Calu3 (cell line): ENCODE measurements at regions of chr12 and their contacts with region 1.

Region 1: GRCh38 chr12:95117178-95117599 is 43.8 kb upstream of the NR2C1 start:
- DNase-seq: peak; percentile 78
- H3K4me3 Mint-ChIP-seq: peak overlapping the region; percentile 78
- H3K27ac Mint-ChIP-seq: peak overlapping the region; percentile 99
- H3K4me1 Mint-ChIP-seq: peaks cover 47% of the 10 kb centered on the region
- H3K27me3 Mint-ChIP-seq: no peaks in the 10 kb centered on the region
- CTCF ChIP-seq: peak; percentile 76

Region 2: DNA sequence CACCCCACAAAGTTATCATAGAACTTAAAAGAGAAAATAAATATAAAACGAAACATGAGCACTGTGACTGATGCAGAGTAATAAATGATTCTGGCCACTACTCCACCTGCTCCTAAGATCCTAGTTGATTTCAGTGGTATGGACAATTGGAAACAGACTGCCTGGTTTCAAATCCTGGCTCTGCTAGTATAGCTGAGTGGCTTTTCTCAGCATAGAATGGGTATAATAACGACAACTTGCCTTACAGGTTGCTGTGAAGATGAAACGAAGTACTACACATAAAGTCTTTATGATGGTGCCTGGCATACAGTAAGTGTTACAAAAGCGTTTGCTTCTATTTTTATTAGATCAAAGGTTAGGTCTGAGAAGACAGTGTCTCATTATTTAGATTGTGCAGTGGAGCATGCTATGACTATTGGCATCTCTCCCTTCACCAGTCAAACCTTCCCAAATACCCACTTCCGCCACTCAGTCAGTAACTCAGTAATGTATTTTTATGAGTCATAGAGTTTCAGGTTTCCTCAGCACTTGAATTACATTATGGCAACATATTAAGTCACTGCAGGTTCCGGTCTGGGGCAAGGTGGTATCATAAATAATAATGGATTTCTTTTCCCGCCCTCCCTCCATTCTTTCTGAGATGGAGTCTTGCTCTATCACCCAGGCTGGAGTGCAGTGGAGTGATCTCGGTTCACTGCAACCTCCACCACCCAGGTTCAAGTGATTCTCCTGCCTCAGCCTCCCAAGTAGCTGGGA is 14.1 kb before region 1 on chr12:
- CTCF ChIA-PET with region 1: interaction called, 6 read pairs
- intact Hi-C with region 1: loop called (anchors 1 kb)
- DNase-seq: peak; percentile 73
- H3K4me3 Mint-ChIP-seq: peak overlapping the region; percentile 13
- H3K27ac Mint-ChIP-seq: peak overlapping the region; percentile 84
- H3K4me1 Mint-ChIP-seq: peaks cover 64% of the 10 kb centered on the region
- H3K27me3 Mint-ChIP-seq: no peaks in the 10 kb centered on the region
- CTCF ChIP-seq: no peak

Region 3: DNA sequence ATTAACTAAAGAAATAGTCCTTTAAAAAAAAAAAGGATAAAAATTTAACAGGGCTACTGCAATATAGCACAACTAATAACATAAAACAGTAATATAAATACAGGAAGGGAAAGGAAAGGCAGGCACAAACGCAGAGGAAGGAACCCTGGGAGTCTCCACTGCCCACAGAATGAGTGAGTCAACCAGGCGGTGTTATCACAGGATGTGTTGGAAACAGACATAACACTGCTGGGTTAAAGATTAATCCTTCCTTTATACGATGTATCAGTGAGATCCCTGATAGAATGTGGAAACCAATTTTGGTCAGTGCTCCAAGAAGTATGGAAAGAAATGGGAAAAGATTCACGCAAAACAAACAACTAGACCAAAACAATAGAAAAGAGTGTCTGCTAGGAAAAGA is 52.2 kb after region 1 on chr12:
- CTCF ChIA-PET with region 1: interaction called, 6 read pairs
- intact Hi-C with region 1: loop called (anchors 2 kb)
- DNase-seq: peak; percentile 80
- H3K4me3 Mint-ChIP-seq: peak overlapping the region; percentile 39
- H3K27ac Mint-ChIP-seq: peak overlapping the region; percentile 90
- H3K4me1 Mint-ChIP-seq: peaks cover 38% of the 10 kb centered on the region
- H3K27me3 Mint-ChIP-seq: no peaks in the 10 kb centered on the region
- CTCF ChIP-seq: no peak

Region 4: DNA sequence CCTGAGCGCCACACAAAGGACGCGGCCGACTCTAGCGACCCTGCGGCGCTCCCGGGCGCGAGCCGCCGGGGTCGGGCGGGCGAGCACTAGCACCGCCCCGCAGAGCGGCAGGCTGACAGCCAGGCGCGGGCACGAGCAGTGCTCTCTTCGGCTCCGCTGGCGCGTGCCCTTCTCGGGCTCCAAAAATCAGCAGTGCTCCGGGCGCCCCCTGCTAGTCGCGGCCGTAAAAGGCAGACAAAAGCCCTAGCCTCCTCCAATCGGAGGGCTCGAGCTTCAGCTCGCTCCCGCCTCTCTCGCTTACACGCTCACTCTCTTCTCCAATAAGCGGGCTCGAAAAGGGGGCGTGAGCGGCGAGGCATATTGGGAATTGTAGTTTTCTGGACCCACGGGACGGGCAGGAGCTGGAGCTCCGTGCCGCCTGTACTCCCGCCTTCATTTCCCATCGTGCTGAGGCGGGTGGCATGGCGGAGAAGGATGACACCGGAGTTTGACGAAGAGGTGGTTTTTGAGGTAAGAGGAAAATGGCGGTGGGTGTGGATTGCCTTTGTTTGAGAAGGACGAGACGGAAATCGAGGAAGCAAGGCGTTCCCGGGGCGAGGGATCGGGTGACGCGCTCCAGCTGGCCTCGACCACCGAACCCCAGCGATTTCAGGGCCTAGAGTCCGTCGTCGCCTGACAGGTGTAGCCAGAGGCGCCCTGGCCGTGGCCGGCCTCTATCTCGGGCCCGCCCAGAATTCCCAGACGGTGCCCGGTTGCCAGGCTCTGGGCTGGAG is 100.4 kb after region 1 on chr12 and contains the starts of genes FGD6 and VEZT:
- CTCF ChIA-PET with region 1: interaction called, 44 read pairs
- intact Hi-C with region 1: loop called (anchors 1 kb)
- DNase-seq: peak; percentile 99
- H3K4me3 Mint-ChIP-seq: peak within 1 kb of the TSS; percentile 77
- H3K27ac Mint-ChIP-seq: peak within 1 kb of the TSS; percentile 88
- H3K4me1 Mint-ChIP-seq: peaks cover 8% of the 10 kb centered on the region
- H3K27me3 Mint-ChIP-seq: no peaks in the 10 kb centered on the region
- CTCF ChIP-seq: peak; percentile 63
- total RNA-seq, gene FGD6: 64.5 and 66.6 TPM in 2 replicates
- total RNA-seq, gene VEZT: 149 and 160 TPM in 2 replicates

Region 5: DNA sequence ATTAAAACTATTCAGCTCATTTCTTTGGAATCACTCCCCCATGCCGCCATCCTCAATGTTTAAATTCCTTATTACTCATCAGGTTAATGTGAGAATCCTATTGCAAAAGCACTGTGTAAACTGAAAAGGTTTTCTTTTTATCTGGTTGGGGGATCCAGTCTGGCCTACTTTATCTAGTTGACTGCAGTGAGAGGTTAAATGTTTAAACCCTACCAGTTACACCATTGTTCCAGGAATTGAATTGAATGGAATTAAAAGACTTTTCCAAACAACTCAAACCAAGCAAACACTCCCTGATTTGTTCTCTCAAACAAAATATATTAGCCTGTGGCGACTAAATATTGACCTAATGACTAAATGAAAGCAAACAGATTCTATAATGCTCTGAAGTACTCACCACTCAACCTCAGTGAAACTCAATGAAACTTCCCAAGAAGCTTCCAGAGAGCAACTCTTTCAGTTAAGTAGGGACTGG is 200.9 kb after region 1 on chr12:
- CTCF ChIA-PET with region 1: interaction called, 5 read pairs
- intact Hi-C with region 1: loop called (anchors 5 kb)
- DNase-seq: peak; percentile 39
- H3K4me3 Mint-ChIP-seq: peak overlapping the region; percentile 35
- H3K27ac Mint-ChIP-seq: peak overlapping the region; percentile 97
- H3K4me1 Mint-ChIP-seq: peaks cover 72% of the 10 kb centered on the region
- H3K27me3 Mint-ChIP-seq: no peaks in the 10 kb centered on the region
- CTCF ChIP-seq: no peak

Region 6: GRCh38 chr12:95532851-95533250 is 415.7 kb after region 1 on chr12:
- CTCF ChIA-PET with region 1: interaction called, 12 read pairs
- intact Hi-C with region 1: loop called (anchors 1 kb)
- DNase-seq: no peak
- H3K4me3 Mint-ChIP-seq: no peak overlapping the region
- H3K27ac Mint-ChIP-seq: no peak overlapping the region
- H3K4me1 Mint-ChIP-seq: peaks cover 9% of the 10 kb centered on the region
- H3K27me3 Mint-ChIP-seq: no peaks in the 10 kb centered on the region
- CTCF ChIP-seq: no peak

Region 7: DNA sequence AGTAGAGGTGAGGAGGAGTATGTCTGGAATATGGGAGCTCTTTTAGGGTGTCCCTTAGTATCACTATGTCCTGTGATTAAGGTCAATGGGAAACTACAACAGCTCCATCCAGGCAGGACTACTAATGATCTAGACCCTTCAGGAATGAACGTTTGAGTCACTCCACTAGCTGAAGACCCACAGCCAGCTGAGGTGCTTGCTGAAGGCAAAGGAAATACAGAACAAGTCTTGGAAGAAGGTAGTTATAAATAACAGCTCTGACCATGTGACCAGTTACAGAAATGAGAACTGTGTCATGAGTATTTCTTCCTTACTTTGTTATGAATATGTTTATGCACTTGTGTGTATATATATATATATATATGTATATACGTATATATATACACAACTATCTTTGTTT is 474.5 kb after region 1 on chr12:
- CTCF ChIA-PET with region 1: no interaction called
- intact Hi-C with region 1: no loop called
- DNase-seq: no peak
- H3K4me3 Mint-ChIP-seq: no peak overlapping the region
- H3K27ac Mint-ChIP-seq: no peak overlapping the region
- H3K4me1 Mint-ChIP-seq: peaks cover 18% of the 10 kb centered on the region
- H3K27me3 Mint-ChIP-seq: no peaks in the 10 kb centered on the region
- CTCF ChIP-seq: no peak